Common myeloid progenitor, CD34-positive (primary cell): ENCODE measurements at regions of chr16 and their contacts with region 1.

Region 1: DNA sequence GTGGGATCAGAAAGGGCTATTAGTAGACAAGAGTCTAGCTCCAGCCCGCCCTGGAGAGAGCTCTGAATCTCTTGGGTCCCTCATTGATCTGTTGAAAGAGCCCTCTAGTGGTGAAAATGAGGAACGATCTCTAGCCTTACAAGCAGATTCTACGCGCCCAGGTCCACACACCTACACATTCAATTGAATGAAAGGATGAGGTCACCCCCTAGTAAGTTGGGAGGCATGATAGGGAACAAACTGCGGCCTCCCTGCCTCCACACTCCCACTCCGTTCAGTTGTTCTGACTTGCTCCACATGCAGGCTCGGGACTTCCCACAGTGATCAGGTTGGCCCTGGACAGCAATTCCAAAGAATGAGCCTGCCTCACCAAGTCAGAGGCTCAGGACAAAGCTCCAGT is 2.9 kb upstream of the CACNG3 start:
- DNase-seq: peak; percentile 59 to 72 (median 68)
- H3K4me3 ChIP-seq: no peak overlapping the region
- H3K27ac ChIP-seq: no peak overlapping the region
- H3K4me1 ChIP-seq: peaks cover 0 to 10% (median 5%) of the 10 kb centered on the region in 4 experiments
- H3K27me3 ChIP-seq: peaks cover 5 to 50% (median 25%) of the 10 kb centered on the region in 5 experiments

Region 2: DNA sequence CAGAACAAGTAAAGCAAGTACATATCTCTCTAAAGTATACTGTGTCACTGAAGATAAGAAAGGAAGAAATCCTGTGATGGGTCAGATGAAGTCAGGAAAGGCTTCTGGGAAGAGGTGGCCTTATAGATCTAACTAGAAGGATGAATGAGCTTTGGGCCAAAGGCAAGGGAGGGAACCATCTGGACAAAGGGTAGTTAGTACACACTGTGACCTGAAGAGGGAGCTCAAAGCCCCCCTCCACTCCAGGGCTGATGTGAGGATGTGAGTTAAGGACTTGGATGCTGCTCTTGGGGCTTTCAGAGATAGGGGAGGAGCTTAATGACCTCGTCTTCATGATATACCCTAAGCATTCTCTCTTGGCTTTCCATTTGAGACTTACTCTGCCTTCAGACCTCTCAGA is 182.3 kb before region 1 on chr16:
- CTCF ChIA-PET with region 1: interaction called, 11 read pairs
- POLR2A ChIA-PET with region 1: no interaction called
- DNase-seq: peak; percentile 52 to 77 (median 69)
- H3K4me3 ChIP-seq: no peak overlapping the region
- H3K27ac ChIP-seq: no peak overlapping the region
- H3K4me1 ChIP-seq: peaks cover 0 to 11% (median 8%) of the 10 kb centered on the region in 4 experiments
- H3K27me3 ChIP-seq: no peaks in the 10 kb centered on the region

Region 3: GRCh38 chr16:24139282-24139681 is 113.9 kb before region 1 on chr16:
- CTCF ChIA-PET with region 1: no interaction called
- POLR2A ChIA-PET with region 1: no interaction called
- DNase-seq: peak in 2 of 3 donors; percentile 7 to 28
- H3K4me3 ChIP-seq: no peak overlapping the region
- H3K27ac ChIP-seq: no peak overlapping the region
- H3K4me1 ChIP-seq: no peaks in the 10 kb centered on the region
- H3K27me3 ChIP-seq: no peaks in the 10 kb centered on the region

Region 4: GRCh38 chr16:24463196-24463945 is 210.2 kb after region 1 on chr16:
- CTCF ChIA-PET with region 1: no interaction called
- POLR2A ChIA-PET with region 1: no interaction called
- DNase-seq: no peak
- H3K4me3 ChIP-seq: no peak overlapping the region
- H3K27ac ChIP-seq: no peak overlapping the region
- H3K4me1 ChIP-seq: no peaks in the 10 kb centered on the region
- H3K27me3 ChIP-seq: peaks cover 0 to 2% (median 0%) of the 10 kb centered on the region in 5 experiments